Activated CD4-positive, alpha-beta T cell treated with anti-CD3 and anti-CD28 coated beads for 36 hours (primary cell): ENCODE measurements at regions of chr11 and their contacts with region 1.

Region 1: GRCh38 chr11:118338637-118339061 is 3.9 kb downstream of the CD3D start:
- DNase-seq: peak; percentile 94
- ATAC-seq: peak; percentile 63
- H3K4me3 Mint-ChIP-seq: peak overlapping the region; percentile 83
- H3K27ac Mint-ChIP-seq: peak overlapping the region; percentile 100
- H3K4me1 Mint-ChIP-seq: peaks cover 45% of the 10 kb centered on the region
- H3K27me3 Mint-ChIP-seq: no peaks in the 10 kb centered on the region

Region 2: GRCh38 chr11:118216621-118217481 is 121.8 kb before region 1 on chr11:
- CTCF ChIA-PET with region 1: no interaction called
- POLR2A ChIA-PET with region 1: interaction called, 4 read pairs
- intact Hi-C with region 1: loop called in 1 of 2 experiments (anchors 2 kb)
- DNase-seq: peak; percentile 76
- ATAC-seq: peak; percentile 73
- H3K4me3 Mint-ChIP-seq: peak overlapping the region; percentile 76
- H3K27ac Mint-ChIP-seq: peak overlapping the region; percentile 100
- H3K4me1 Mint-ChIP-seq: peaks cover 97% of the 10 kb centered on the region
- H3K27me3 Mint-ChIP-seq: no peaks in the 10 kb centered on the region

Region 3: GRCh38 chr11:118353084-118353710 is 14.5 kb after region 1 on chr11:
- CTCF ChIA-PET with region 1: interaction called, 14 read pairs
- POLR2A ChIA-PET with region 1: no interaction called
- intact Hi-C with region 1: no loop called
- DNase-seq: no peak
- ATAC-seq: no peak
- H3K4me3 Mint-ChIP-seq: no peak overlapping the region
- H3K27ac Mint-ChIP-seq: no peak overlapping the region
- H3K4me1 Mint-ChIP-seq: peaks cover 28% of the 10 kb centered on the region
- H3K27me3 Mint-ChIP-seq: no peaks in the 10 kb centered on the region